Heart left ventricle (tissue), 16 donors: ENCODE measurements at regions of chr22 and their contacts with region 1.

Region 1: GRCh38 chr22:45450921-45451651 is 37.6 kb downstream of the RIBC2 start:
- DNase-seq: peak in 1 of 5 donors; percentile 44
- ATAC-seq: peak; percentile 22 to 78 (median 64)
- H3K4me3 ChIP-seq: no peak overlapping the region
- H3K27ac ChIP-seq: peak overlapping the region; percentile 23 to 79 (median 58)
- H3K4me1 ChIP-seq: peaks cover 0 to 28% (median 0%) of the 10 kb centered on the region in 12 donors
- H3K27me3 ChIP-seq: peaks cover 0 to 5% (median 0%) of the 10 kb centered on the region in 9 donors
- CTCF ChIP-seq: no peak
- POLR2A ChIP-seq: no peak

Region 2: DNA sequence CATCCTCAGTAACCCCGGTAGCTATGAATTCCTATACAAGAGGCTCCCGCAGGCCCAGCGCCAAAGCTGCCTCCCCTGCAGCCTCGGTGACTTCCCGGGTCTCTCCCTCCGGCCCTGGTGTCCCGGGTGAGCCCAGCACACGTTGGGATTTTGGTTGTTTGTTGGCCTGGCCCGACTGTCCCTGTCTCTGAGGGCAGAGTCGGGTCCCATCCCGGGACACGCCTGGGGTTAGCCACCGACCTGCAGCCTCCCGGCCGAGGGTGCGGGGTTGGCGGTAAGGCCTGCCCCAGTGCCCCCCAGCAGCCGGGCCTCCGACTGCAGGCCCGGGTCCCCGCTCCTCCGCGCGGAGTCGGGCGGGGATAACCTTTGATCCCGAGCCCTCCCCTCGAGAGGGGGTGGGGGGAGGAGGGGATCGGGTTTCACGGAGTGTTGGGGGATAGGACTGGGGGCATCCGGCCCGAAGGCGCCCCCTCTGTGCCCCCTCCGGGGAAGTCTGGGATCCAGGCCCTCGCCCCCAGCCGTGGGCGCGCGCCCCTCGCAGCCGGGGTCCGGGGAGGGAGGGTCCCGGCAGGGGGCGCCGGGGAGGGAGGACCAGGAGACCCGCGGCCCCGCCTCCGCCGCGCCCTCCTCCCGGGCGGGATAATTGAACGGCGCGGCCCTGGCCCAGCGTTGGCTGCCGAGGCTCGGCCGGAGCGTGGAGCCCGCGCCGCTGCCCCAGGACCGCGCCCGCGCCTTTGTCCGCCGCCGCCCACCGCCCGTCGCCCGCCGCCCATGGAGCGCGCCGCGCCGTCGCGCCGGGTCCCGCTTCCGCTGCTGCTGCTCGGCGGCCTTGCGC is 51.3 kb after region 1 on chr22 and contains the start of gene FBLN1:
- intact Hi-C with region 1: loop called in 2 of 10 experiments (anchors 5 kb)
- DNase-seq: peak; percentile 44 to 69 (median 57)
- ATAC-seq: peak in 2 of 4 donors; percentile 55 to 74
- H3K4me3 ChIP-seq: peak within 1 kb of the TSS; percentile 35 to 72 (median 60)
- H3K27ac ChIP-seq: peak within 1 kb of the TSS in 11 of 12 donors; percentile 23 to 84 (median 73)
- H3K4me1 ChIP-seq: peaks cover 0 to 42% (median 6%) of the 10 kb centered on the region in 12 donors
- H3K27me3 ChIP-seq: peaks cover 0 to 41% (median 20%) of the 10 kb centered on the region in 9 donors
- CTCF ChIP-seq: peak in 5 of 12 donors; percentile 16 to 37 (median 27)
- POLR2A ChIP-seq: no peak
- total RNA-seq, gene FBLN1: 30.0 to 239 (median 50.3) TPM